Naive thymus-derived CD4-positive, alpha-beta T cell (primary cell): ENCODE measurements at regions of chr3 and their contacts with region 1.

Region 1: GRCh38 chr3:196739671-196740480 is at the start of gene PAK2:
- DNase-seq: peak; percentile 80 to 92 (median 85)
- ATAC-seq: peak; percentile 95
- H3K4me3 ChIP-seq: peak within 1 kb of the TSS; percentile 78
- H3K4me3 Mint-ChIP-seq: peak within 1 kb of the TSS; percentile 90 to 100 (median 100)
- H3K27ac ChIP-seq: peak within 1 kb of the TSS; percentile 94
- H3K27ac Mint-ChIP-seq: peak within 1 kb of the TSS; percentile 93 to 100 (median 99)
- H3K4me1 ChIP-seq: peaks cover 15 to 25% of the 10 kb centered on the region in 2 donors
- H3K4me1 Mint-ChIP-seq: peaks cover 25 to 38% (median 29%) of the 10 kb centered on the region in 7 donors
- H3K27me3 ChIP-seq: no peaks in the 10 kb centered on the region
- H3K27me3 Mint-ChIP-seq: no peaks in the 10 kb centered on the region
- total RNA-seq, gene PAK2: 57.7 to 97.3 (median 79.7) TPM

Region 2: DNA sequence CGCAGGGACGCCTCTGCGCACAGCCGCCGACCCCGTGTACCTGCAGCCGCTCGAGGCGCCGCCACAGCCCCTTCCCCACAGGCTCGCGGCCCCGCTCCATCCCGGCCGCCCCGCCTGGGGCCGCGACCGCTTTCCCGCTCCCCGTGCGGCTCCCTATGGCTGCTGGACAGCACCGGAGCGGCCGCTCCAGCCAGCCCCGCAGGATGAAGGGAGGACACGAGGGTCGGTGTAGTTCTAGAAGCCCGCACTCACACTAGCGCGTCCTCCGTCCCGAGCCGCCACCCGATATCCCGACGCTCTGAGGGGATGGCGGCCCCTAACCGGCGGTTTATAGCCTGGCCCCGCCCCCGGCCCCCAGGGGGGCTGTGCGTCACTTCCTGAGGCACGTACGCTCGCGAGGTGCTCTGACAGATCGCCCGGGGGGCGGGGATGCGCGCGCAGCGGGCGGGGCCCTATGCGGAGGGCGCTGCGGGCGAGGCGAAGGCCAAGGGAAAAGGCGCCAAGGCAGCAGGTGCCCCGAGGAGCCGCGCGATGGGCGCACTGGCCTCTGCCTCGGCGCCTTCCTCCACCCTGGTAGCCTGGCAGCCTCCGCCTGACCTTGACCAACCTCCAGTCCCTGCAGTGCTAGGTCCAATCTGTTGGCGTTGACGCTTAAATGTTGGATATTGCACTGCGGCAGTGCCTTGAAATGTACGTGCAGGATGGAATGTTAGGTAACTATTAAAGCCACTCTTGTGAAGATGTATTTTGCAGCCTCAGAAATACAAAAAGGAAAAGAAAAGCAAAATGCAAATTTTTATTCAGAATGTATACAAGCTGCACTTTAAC is 657.9 kb before region 1 on chr3 and contains the start of gene TFRC:
- CTCF ChIA-PET with region 1: no interaction called
- POLR2A ChIA-PET with region 1: no interaction called
- intact Hi-C with region 1: loop called in 1 of 2 experiments (anchors 2 kb)
- DNase-seq: peak; percentile 92 to 98 (median 95)
- ATAC-seq: peak; percentile 98
- H3K4me3 ChIP-seq: peak within 1 kb of the TSS; percentile 70
- H3K4me3 Mint-ChIP-seq: peak within 1 kb of the TSS; percentile 89 to 100 (median 96)
- H3K27ac ChIP-seq: peak within 1 kb of the TSS; percentile 96
- H3K27ac Mint-ChIP-seq: peak within 1 kb of the TSS; percentile 86 to 99 (median 95)
- H3K4me1 ChIP-seq: peaks cover 17 to 25% of the 10 kb centered on the region in 2 donors
- H3K4me1 Mint-ChIP-seq: peaks cover 22 to 46% (median 39%) of the 10 kb centered on the region in 7 donors
- H3K27me3 ChIP-seq: no peaks in the 10 kb centered on the region
- H3K27me3 Mint-ChIP-seq: no peaks in the 10 kb centered on the region
- total RNA-seq, gene TFRC: 51.3 to 417 (median 144) TPM

Region 3: GRCh38 chr3:196632046-196632751 is 107.7 kb before region 1 on chr3:
- CTCF ChIA-PET with region 1: no interaction called
- POLR2A ChIA-PET with region 1: interaction called, 3 read pairs
- intact Hi-C with region 1: loop called (anchors 1 kb)
- DNase-seq: peak; percentile 69 to 91 (median 88)
- ATAC-seq: peak; percentile 89
- H3K4me3 ChIP-seq: peak overlapping the region; percentile 48
- H3K4me3 Mint-ChIP-seq: peak overlapping the region; percentile 80 to 96 (median 90)
- H3K27ac ChIP-seq: peak overlapping the region; percentile 78
- H3K27ac Mint-ChIP-seq: peak overlapping the region; percentile 93 to 99 (median 97)
- H3K4me1 ChIP-seq: peaks cover 30 to 31% of the 10 kb centered on the region in 2 donors
- H3K4me1 Mint-ChIP-seq: peaks cover 31 to 74% (median 62%) of the 10 kb centered on the region in 7 donors
- H3K27me3 ChIP-seq: no peaks in the 10 kb centered on the region
- H3K27me3 Mint-ChIP-seq: no peaks in the 10 kb centered on the region

Region 4: DNA sequence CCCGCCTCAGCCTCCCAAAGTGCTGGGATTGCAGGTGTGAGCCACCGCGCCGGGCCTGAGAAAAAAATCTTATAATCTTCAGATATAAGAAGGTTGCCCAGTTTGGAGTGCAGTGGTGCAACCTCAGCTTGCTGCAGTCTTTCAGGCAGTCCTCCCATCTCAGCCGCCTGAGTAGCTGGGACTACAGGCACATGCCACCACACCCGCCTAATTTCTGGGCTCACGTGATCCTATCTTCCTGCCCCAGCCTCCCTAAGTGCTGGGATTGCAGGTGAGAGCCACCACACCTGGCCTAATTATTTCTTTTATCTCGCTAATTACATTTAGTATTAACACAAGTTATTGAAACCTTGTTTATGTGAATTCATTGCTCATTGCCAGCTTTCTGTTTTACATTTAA is 13.3 kb after region 1 on chr3:
- CTCF ChIA-PET with region 1: no interaction called
- POLR2A ChIA-PET with region 1: interaction called, 4 read pairs
- intact Hi-C with region 1: loop called in 1 of 2 experiments (anchors 1 kb)
- DNase-seq: no peak
- ATAC-seq: no peak
- H3K4me3 ChIP-seq: no peak overlapping the region
- H3K4me3 Mint-ChIP-seq: peak overlapping the region in 1 of 10 donors; percentile 20
- H3K27ac ChIP-seq: no peak overlapping the region
- H3K27ac Mint-ChIP-seq: peak overlapping the region in 2 of 9 donors; percentile 48 to 62
- H3K4me1 ChIP-seq: peaks cover 0 to 6% of the 10 kb centered on the region in 2 donors
- H3K4me1 Mint-ChIP-seq: peaks cover 45 to 77% (median 65%) of the 10 kb centered on the region in 7 donors
- H3K27me3 ChIP-seq: no peaks in the 10 kb centered on the region
- H3K27me3 Mint-ChIP-seq: no peaks in the 10 kb centered on the region

Region 5: GRCh38 chr3:196867507-196868296 is 127.8 kb after region 1 on chr3 and contains the start of gene SENP5:
- CTCF ChIA-PET with region 1: no interaction called
- POLR2A ChIA-PET with region 1: interaction called, 20 read pairs
- intact Hi-C with region 1: loop called (anchors 1 kb)
- DNase-seq: peak; percentile 79 to 92 (median 87)
- ATAC-seq: peak; percentile 99
- H3K4me3 ChIP-seq: peak within 1 kb of the TSS; percentile 86
- H3K4me3 Mint-ChIP-seq: peak within 1 kb of the TSS; percentile 90 to 99 (median 97)
- H3K27ac ChIP-seq: peak within 1 kb of the TSS; percentile 98
- H3K27ac Mint-ChIP-seq: peak within 1 kb of the TSS; percentile 90 to 99 (median 95)
- H3K4me1 ChIP-seq: peaks cover 13 to 16% of the 10 kb centered on the region in 2 donors
- H3K4me1 Mint-ChIP-seq: peaks cover 9 to 42% (median 34%) of the 10 kb centered on the region in 7 donors
- H3K27me3 ChIP-seq: no peaks in the 10 kb centered on the region
- H3K27me3 Mint-ChIP-seq: no peaks in the 10 kb centered on the region
- total RNA-seq, gene SENP5: 40.6 to 59.4 (median 43.1) TPM

Region 6: DNA sequence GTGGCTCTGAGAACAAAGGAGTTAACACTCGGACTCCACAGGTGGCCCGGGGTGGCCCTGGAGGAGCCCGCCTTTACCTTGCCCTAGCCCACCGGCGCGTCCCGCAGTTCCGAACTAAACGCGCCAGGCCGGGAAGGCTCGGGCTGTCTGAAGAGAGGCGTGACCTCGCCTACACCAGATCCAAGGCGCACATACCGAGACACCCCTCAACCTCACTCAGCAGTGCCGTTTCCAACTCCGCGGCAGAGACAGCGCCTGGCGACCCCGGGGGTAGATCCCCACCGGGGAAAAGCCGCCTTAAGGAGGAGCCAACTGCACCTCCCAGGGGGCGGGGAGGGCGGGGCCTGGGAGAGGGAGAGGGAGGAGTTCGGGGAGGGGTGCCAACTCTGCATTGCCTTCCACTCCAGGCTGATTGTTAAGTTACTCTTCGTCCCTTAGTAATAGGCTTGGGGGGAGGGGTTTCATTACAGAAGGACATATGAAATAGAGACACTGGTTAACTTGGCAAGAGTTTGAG is 558.5 kb after region 1 on chr3 and contains the start of gene DLG1:
- CTCF ChIA-PET with region 1: no interaction called
- POLR2A ChIA-PET with region 1: interaction called, 4 read pairs
- intact Hi-C with region 1: loop called in 1 of 2 experiments (anchors 2 kb)
- DNase-seq: peak in 4 of 9 donors; percentile 61 to 81 (median 72)
- ATAC-seq: peak; percentile 70
- H3K4me3 ChIP-seq: peak within 1 kb of the TSS; percentile 86
- H3K4me3 Mint-ChIP-seq: peak within 1 kb of the TSS; percentile 88 to 98 (median 96)
- H3K27ac ChIP-seq: peak within 1 kb of the TSS; percentile 79
- H3K27ac Mint-ChIP-seq: peak within 1 kb of the TSS; percentile 92 to 98 (median 94)
- H3K4me1 ChIP-seq: peaks cover 5 to 11% of the 10 kb centered on the region in 2 donors
- H3K4me1 Mint-ChIP-seq: peaks cover 9 to 40% (median 22%) of the 10 kb centered on the region in 7 donors
- H3K27me3 ChIP-seq: no peaks in the 10 kb centered on the region
- H3K27me3 Mint-ChIP-seq: peaks cover 0 to 35% (median 10%) of the 10 kb centered on the region in 5 donors
- total RNA-seq, gene DLG1: 79.5 to 96.5 (median 86.0) TPM